HepG2 (cell line): ENCODE measurements at regions of chr17 and their contacts with region 1.

Region 1: DNA sequence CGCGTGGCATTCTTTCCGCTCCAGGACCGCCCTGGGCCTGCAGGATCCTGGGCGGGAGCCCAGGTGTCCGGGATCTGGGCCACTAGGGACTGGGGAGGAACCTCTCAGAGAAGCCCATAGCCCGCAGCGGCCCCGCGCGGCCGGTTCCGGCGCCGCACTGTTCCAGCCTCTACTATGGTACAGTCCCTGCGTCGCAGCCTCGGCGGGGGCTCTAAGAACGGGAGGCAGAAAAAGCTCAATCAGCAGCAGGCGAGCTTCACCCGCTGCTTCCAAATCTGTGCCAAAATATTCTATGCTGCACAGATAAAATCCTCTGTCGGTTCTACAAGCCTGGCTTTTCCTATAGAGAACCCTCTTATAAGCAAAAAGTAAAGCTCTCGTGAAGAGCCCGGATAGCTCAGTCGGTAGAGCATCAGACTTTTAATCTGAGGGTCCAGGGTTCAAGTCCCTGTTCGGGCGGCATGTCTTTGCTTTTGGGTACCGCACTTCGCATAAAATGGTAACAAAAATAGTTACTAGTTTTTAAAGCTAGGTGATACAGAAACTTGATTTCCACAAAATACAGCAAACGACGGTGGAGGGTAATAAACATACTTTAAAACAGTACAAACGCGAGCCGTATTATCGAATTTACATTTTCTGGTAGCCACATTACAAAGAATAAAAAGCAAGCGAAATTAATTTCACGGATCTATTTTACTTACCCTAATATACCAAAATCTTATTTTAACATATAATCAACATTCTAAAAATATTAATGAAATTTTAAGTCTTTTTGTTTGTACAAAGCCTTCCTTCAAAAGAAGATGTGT is 661 bp upstream of the ALOXE3 start:
- DNase-seq: peak; percentile 77
- ATAC-seq: peak; percentile 75
- H3K4me3 ChIP-seq: peak overlapping the region; percentile 68 to 95 (median 94)
- H3K27ac ChIP-seq: peak overlapping the region; percentile 10
- H3K4me1 ChIP-seq: peaks cover 52% of the 10 kb centered on the region
- H3K27me3 ChIP-seq: peaks cover 6 to 58% of the 10 kb centered on the region in 2 experiments
- CTCF ChIP-seq: peak; percentile 81
- EP300 ChIP-seq: no peak
- POLR2A ChIP-seq: no peak
- RAD21 ChIP-seq: peak; percentile 53; the same call in 1 of the 2 replicates

Region 2: GRCh38 chr17:8073627-8074484 is 45.1 kb before region 1 on chr17:
- CTCF ChIA-PET with region 1: no interaction called
- POLR2A ChIA-PET with region 1: no interaction called
- in situ Hi-C with region 1: loop called (anchors 5 kb)
- intact Hi-C with region 1: no loop called
- DNase-seq: peak; percentile 32
- ATAC-seq: peak; percentile 78
- H3K4me3 ChIP-seq: peak overlapping the region in 1 of 3 experiments; percentile 41; a peak in 1 of 6 replicates
- H3K27ac ChIP-seq: no peak overlapping the region
- H3K4me1 ChIP-seq: peaks cover 1% of the 10 kb centered on the region
- H3K27me3 ChIP-seq: peaks cover 24 to 84% of the 10 kb centered on the region in 2 experiments
- CTCF ChIP-seq: peak; percentile 84
- EP300 ChIP-seq: no peak
- POLR2A ChIP-seq: no peak
- RAD21 ChIP-seq: 0 out of 2 replicates have a peak, but pooled peaks have one; percentile 40

Region 3: DNA sequence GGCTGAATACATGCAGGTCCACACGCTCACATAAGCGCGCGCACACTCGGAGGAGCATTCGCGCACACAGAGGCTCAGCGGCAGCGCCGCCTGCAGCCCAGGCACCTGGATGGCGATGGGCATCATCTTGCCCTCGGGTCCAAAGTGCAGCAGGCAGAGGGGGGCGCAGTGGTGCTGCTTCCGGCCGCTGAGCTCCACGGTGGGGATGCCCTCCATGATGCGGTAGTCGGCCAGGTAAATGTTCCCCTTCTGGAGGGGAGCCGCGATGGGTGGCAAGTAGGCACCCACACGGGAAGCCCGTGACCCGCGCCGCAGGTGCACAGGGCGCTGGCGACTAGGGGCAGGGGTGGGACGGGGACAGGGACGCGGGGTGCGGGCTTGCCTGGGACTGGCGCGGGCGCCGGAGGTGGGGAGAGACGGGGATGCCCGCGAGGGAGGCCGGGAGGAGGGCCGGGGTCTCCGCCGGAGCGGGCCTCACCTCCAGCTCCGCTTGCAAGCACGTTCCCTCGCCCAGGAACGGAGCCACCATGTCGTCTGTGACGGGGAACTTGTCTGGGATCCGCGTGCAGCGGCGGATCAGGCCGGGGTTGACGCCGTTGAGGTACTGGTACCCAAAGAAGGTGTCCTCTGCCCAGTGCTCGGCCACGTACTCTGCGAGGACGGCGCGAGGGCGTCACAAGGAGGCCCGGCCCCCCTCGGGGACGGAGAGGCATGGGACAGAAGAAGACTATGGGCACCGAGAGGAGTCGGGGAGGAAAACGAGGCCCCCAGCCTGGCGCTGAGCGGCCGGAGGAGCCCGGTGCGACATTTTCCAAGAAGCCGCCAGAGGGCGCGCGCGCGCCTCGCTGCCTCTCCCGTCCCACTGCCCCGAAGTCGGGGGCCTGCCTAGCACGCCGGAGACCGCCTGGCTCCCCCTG is 39.4 kb before region 1 on chr17:
- CTCF ChIA-PET with region 1: no interaction called
- POLR2A ChIA-PET with region 1: no interaction called
- in situ Hi-C with region 1: loop called (anchors 5 kb)
- intact Hi-C with region 1: loop called (anchors 5 kb)
- DNase-seq: peak; percentile 43
- ATAC-seq: peak; percentile 87
- H3K4me3 ChIP-seq: peak overlapping the region; percentile 55 to 77 (median 63)
- H3K27ac ChIP-seq: no peak overlapping the region
- H3K4me1 ChIP-seq: peaks cover 24% of the 10 kb centered on the region
- H3K27me3 ChIP-seq: peaks cover 9 to 49% of the 10 kb centered on the region in 2 experiments
- CTCF ChIP-seq: peak; percentile 87
- EP300 ChIP-seq: no peak
- POLR2A ChIP-seq: no peak
- RAD21 ChIP-seq: peak; percentile 66

Region 4: DNA sequence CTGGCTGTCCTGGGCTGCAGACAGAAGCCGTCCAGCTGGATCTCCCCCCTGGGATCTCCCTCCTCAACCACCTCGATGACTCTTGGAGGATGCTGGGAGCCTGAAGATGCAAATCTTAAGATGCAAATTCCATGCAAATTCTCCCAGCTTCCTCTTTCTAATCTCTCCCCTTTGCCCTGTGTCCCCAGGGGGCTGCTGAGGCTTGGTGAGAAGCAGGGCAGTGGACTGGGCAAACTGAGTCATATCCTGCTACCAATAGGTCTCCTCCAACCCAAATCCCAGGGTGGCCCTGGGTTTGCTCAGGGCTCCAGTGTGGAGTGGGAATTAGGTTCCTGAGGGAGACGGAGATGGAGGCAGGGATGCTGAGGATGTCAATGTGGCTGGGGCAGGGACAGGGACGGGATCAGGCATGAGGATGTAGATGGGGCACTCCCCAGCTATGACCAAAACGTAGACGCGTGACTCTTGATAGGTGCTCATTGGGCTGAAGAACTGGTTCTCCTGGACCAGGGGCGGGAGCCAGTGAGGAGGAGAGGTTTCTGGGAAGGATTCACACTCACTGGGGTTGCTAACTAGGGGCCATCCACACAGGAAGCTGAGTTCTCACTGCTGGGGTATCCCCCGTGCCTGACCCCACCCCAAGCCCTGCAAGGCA is 27.8 kb before region 1 on chr17:
- CTCF ChIA-PET with region 1: interaction called, 12 read pairs
- POLR2A ChIA-PET with region 1: no interaction called
- in situ Hi-C with region 1: no loop called
- intact Hi-C with region 1: loop called (anchors 2 kb)
- DNase-seq: no peak
- ATAC-seq: no peak
- H3K4me3 ChIP-seq: no peak overlapping the region
- H3K27ac ChIP-seq: no peak overlapping the region
- H3K4me1 ChIP-seq: no peaks in the 10 kb centered on the region; the same call in 1 of the 2 replicates
- H3K27me3 ChIP-seq: peaks cover 9 to 71% of the 10 kb centered on the region in 2 experiments; a peak in 4 of 5 replicates
- CTCF ChIP-seq: no peak
- EP300 ChIP-seq: no peak
- POLR2A ChIP-seq: no peak
- RAD21 ChIP-seq: no peak

Region 5: DNA sequence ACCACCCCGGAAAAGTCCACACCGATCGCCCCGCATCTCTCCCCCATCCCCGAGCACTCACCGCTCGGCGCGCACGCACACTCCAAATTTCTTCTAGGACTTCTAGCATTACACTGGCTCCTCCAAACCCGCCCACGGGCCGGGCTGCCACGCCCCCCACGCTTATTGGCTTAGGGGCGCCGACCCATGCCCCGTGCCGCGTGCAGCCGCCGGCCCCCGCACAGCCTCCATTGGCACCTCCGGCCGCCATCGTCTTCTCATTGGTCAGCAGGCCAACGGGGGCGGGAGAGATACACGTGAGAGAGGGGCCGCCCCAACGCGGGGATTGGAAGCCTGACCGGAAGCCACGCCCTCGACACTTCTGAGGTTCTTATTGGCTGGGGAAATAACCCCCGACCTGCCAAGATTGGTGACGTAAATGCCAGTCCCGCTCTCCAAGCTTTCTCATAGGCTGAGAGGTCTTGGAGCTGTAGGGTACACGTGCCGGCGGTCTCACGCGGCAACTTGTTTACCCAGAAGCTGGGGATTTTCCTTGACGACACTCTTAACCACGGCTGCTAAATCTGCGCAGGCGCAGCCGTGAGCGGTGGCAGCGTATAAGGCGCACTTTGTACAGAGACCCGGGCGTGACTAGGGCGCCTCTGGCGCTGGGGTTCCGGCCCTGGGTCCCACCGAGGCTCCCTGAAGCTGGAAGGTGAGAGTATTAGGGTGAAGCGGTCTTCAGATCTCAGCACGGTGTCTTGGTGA is 37.4 kb after region 1 on chr17:
- CTCF ChIA-PET with region 1: interaction called, 4 read pairs
- POLR2A ChIA-PET with region 1: interaction called, 8 read pairs
- in situ Hi-C with region 1: loop called (anchors 5 kb)
- intact Hi-C with region 1: loop called (anchors 1 kb)
- DNase-seq: peak; percentile 98
- ATAC-seq: peak; percentile 62
- H3K4me3 ChIP-seq: peak overlapping the region; percentile 58 to 70 (median 63); a peak in 5 of 6 replicates
- H3K27ac ChIP-seq: peak overlapping the region; percentile 86
- H3K4me1 ChIP-seq: peaks cover 71% of the 10 kb centered on the region
- H3K27me3 ChIP-seq: no peaks in the 10 kb centered on the region
- CTCF ChIP-seq: peak; percentile 25
- EP300 ChIP-seq: peak in 1 of 2 experiments; percentile 66; a peak in 2 of 4 replicates
- POLR2A ChIP-seq: peak; percentile 63 to 70
- RAD21 ChIP-seq: no peak

Region 6: DNA sequence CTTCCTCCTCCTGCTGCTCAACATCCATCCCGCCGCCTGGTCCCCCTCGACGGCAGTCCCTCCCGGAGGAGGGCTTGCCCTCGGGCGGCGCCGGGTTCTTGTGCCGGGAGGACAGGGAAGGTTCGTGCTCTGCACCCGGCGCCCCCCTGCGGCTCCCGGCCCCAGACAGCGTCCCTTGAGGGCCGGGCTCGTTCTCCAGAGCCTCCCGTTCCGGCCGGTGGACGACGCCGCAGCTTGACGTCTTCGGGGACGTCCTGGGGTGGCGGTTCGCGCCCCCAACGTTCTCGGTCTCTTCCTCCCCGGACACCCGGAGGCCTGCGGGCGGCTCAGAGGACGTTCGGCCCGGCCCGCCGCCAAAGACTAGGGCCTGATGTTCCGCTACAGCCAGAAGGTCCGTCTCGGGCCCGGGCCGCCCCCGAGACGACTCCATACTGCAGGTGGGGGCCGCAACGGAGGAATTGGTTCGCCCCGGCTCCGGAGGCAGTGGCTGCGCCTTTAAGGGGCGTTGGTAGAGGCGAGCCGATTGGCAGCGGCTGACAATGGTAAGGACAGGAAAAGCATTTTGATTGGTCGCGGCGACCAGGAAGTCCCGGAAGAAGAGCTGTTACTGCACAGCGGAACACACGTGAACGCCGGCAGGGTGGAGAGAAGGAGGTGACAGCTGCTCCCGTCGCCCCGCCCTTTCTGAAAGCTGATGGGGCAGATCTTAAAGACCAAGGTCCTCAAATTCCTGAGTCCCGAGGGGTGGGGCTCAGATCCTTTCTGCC is 70.9 kb after region 1 on chr17 and contains the start of gene BORCS6:
- CTCF ChIA-PET with region 1: interaction called, 3 read pairs
- POLR2A ChIA-PET with region 1: interaction called, 9 read pairs
- in situ Hi-C with region 1: loop called (anchors 10 kb)
- intact Hi-C with region 1: loop called (anchors 2 kb)
- DNase-seq: peak; percentile 95
- ATAC-seq: peak; percentile 67
- H3K4me3 ChIP-seq: peak within 1 kb of the TSS; percentile 74 to 92 (median 77)
- H3K27ac ChIP-seq: peak within 1 kb of the TSS; percentile 64
- H3K4me1 ChIP-seq: peaks cover 47% of the 10 kb centered on the region
- H3K27me3 ChIP-seq: no peaks in the 10 kb centered on the region; a peak in 1 of 5 replicates
- CTCF ChIP-seq: peak; percentile 47
- EP300 ChIP-seq: peak in 1 of 2 experiments; percentile 6; a peak in 1 of 4 replicates
- POLR2A ChIP-seq: peak; percentile 30 to 46; a peak in 2 of 4 replicates
- RAD21 ChIP-seq: peak; percentile 18; the same call in 1 of the 2 replicates
- total RNA-seq, gene BORCS6: 5.1 and 5.3 TPM in 2 replicates

Region 7: GRCh38 chr17:8300627-8301242 is 181.8 kb after region 1 on chr17:
- CTCF ChIA-PET with region 1: no interaction called
- POLR2A ChIA-PET with region 1: no interaction called
- in situ Hi-C with region 1: loop called (anchors 5 kb)
- intact Hi-C with region 1: no loop called
- DNase-seq: peak; percentile 65
- ATAC-seq: peak; percentile 89
- H3K4me3 ChIP-seq: no peak overlapping the region
- H3K27ac ChIP-seq: no peak overlapping the region
- H3K4me1 ChIP-seq: peaks cover 42% of the 10 kb centered on the region; the same call in 1 of the 2 replicates
- H3K27me3 ChIP-seq: no peaks in the 10 kb centered on the region
- CTCF ChIP-seq: peak; percentile 93
- EP300 ChIP-seq: no peak
- POLR2A ChIP-seq: no peak
- RAD21 ChIP-seq: peak; percentile 84